Heart right ventricle (tissue), 16 donors: ENCODE measurements at regions of chr9 and their contacts with region 1.

Region 1: GRCh38 chr9:81389569-81389993 is 299.8 kb downstream of the TLE1 start:
- DNase-seq: no peak
- ATAC-seq: peak in 6 of 8 donors; percentile 53 to 89 (median 67)
- H3K4me3 ChIP-seq: no peak overlapping the region
- H3K27ac ChIP-seq: no peak overlapping the region
- H3K4me1 ChIP-seq: peaks cover 0 to 24% (median 9%) of the 10 kb centered on the region in 9 donors
- H3K27me3 ChIP-seq: no peaks in the 10 kb centered on the region
- CTCF ChIP-seq: no peak

Region 2: GRCh38 chr9:81445331-81445921 is 55.8 kb after region 1 on chr9:
- intact Hi-C with region 1: loop called in 1 of 10 experiments (anchors 10 kb)
- DNase-seq: no peak
- ATAC-seq: no peak
- H3K4me3 ChIP-seq: no peak overlapping the region
- H3K27ac ChIP-seq: no peak overlapping the region
- H3K4me1 ChIP-seq: no peaks in the 10 kb centered on the region
- H3K27me3 ChIP-seq: no peaks in the 10 kb centered on the region
- CTCF ChIP-seq: no peak

Region 3: GRCh38 chr9:81552581-81552991 is 163.0 kb after region 1 on chr9:
- intact Hi-C with region 1: no loop called
- DNase-seq: peak in 1 of 2 donors; percentile 18
- ATAC-seq: peak in 7 of 8 donors; percentile 17 to 79 (median 42)
- H3K4me3 ChIP-seq: no peak overlapping the region
- H3K27ac ChIP-seq: peak overlapping the region in 3 of 10 donors; percentile 24 to 30 (median 28)
- H3K4me1 ChIP-seq: peaks cover 0 to 13% (median 4%) of the 10 kb centered on the region in 9 donors
- H3K27me3 ChIP-seq: no peaks in the 10 kb centered on the region
- CTCF ChIP-seq: no peak

Region 4: GRCh38 chr9:81665322-81665871 is 275.8 kb after region 1 on chr9:
- intact Hi-C with region 1: no loop called
- DNase-seq: no peak
- ATAC-seq: peak in 5 of 8 donors; percentile 14 to 65 (median 33)
- H3K4me3 ChIP-seq: peak overlapping the region in 1 of 10 donors; percentile 7
- H3K27ac ChIP-seq: no peak overlapping the region
- H3K4me1 ChIP-seq: peaks cover 0 to 63% (median 27%) of the 10 kb centered on the region in 9 donors
- H3K27me3 ChIP-seq: no peaks in the 10 kb centered on the region
- CTCF ChIP-seq: no peak